Common myeloid progenitor, CD34-positive (primary cell): ENCODE measurements at regions of chr9 and their contacts with region 1.

Region 1: DNA sequence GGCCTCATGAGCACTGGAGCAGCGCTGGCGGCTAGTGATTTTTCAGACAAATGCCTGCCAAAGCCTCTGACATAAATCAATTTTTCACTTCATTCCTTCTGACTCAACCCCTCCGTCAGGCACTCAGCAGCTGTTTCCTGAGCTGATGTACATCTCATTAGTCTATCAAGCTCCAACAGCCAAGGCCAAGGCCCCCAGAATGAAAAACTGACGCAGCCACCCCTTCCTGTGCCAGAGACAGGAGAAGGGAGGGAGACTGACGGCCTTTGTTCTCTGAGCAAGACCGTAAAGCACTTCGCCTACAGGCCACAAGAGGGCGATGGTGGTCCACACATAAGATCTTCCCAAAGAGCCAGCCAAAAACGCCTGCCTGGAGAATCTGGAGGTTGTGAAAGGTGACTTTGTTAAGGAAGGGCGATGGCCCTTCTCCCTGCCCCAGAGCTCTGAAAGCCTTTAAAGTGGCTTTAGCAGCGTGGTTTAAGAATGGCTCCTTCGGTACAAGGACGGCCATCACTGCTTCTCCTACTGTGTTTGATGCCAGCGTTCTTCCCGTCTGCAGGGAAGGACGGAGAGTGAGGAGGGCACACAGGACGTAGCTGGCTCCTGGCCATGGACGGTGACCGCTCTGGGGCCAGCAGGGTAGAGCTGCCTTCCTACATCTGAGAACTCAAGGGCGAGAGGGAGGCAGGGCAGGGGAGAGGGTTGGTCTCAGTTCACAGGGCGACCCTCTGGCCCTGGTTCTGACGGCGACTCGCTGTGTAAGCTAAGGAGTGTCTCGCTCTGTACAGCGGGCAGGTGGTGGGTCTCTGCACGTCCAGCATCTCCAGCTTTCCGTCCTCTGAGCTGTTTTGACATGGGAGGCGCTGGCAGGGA is 37.0 kb downstream of the ALG2 start:
- DNase-seq: peak; percentile 95 to 99 (median 98)
- H3K4me3 ChIP-seq: peak overlapping the region in 4 of 7 experiments; percentile 38 to 65 (median 56)
- H3K27ac ChIP-seq: no peak overlapping the region
- H3K4me1 ChIP-seq: peaks cover 7 to 42% (median 32%) of the 10 kb centered on the region in 4 experiments
- H3K27me3 ChIP-seq: no peaks in the 10 kb centered on the region

Region 2: DNA sequence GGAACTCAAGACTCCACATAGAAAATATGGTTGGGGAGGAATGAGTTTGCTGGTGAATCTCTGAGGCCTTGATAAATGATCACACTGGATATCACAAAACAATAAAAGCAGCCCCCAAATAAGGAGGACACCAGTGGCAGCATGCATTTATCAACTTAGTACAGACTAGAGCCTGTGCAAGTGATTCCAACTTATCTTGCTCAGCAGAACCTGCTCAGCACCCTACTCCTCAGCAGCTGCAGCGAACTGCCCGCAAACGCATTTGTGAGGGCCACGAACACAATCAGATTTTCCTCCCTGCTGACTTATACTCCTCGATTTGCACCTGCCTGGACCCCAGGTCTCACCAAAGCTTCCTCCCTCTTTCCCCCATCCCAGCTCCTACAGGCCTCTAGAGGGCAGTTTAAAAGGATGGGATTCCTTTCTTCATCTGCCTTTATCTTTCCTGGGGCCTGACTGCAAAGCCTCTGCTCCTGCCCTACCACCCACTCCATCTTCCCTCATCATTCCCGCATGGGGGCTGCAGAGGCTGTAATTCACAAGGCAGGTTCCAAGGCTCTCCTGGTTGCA is 429.6 kb before region 1 on chr9:
- CTCF ChIA-PET with region 1: no interaction called
- POLR2A ChIA-PET with region 1: no interaction called
- DNase-seq: peak in 1 of 3 donors; percentile 13
- H3K4me3 ChIP-seq: no peak overlapping the region
- H3K27ac ChIP-seq: no peak overlapping the region
- H3K4me1 ChIP-seq: peaks cover 0 to 11% (median 0%) of the 10 kb centered on the region in 4 experiments
- H3K27me3 ChIP-seq: no peaks in the 10 kb centered on the region

Region 3: DNA sequence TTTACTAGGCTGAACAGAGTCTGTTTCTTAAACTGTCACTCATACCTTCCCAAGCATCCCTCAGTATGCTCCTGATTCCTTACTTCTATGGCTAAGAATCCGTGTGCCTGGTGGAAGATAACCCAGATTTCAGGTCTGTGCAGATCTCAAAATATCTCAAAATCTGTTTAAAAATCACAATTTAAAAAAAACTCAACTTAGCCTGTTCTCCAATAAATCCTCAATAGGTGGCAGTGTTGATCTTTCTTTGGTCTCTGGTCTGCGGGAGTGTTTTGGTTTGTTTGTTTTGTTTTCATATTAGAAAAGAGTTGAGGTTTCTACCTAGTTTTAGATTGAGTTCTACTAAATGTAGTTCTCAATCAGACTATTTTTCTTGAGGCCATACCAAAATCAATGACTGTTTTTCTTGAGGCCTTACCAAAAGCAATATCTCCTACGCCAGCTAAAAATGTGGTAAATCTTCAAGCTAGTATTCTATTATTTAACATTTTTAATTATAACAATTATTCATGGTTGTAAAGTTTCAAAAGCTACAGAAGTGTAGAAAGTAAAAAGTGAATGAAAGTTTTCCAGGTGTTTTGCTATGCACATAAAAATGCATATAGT is 21.8 kb before region 1 on chr9:
- CTCF ChIA-PET with region 1: interaction called, 148 read pairs
- POLR2A ChIA-PET with region 1: interaction called, 6 read pairs
- DNase-seq: peak; percentile 59 to 83 (median 71)
- H3K4me3 ChIP-seq: no peak overlapping the region
- H3K27ac ChIP-seq: no peak overlapping the region
- H3K4me1 ChIP-seq: peaks cover 3 to 9% (median 7%) of the 10 kb centered on the region in 4 experiments
- H3K27me3 ChIP-seq: peaks cover 0 to 17% (median 6%) of the 10 kb centered on the region in 5 experiments

Region 4: DNA sequence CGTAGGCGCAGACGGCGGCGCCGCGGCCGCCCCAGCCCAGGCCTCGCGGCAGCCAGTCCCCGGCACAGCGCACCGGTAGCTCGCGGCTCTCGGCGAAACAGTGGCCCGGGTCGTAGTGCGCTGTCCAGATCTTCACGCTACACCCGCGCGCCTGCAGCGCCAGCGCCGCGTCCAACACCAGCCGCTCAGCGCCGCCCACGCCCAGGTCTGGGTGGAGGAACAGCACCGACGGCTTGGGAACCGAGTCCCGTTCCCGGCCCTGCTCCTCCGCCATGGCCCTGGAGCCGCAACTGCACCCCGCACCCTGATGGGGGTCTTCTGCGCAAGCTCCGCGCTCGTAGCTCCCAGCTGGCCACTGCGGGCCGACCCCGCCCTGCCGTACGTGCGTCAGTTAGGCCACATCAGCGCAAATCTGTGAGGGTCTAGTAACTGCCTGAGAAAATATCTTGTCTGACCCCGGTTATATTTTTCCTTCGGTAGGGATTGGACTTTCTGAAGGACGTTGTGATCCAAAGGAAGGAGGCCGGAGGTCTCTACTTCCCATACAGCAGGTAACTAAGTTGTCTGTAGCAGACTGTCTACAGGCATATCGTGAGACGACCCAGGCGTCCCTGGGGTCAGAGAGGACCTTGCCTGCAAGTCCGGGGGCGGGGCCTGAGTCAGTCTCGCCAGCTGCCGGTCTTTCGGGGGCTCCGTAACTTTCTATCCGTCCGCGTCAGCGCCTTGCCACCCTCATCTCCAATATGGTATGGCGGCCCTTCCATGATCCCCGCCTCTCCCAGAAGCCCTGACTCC is 37.1 kb after region 1 on chr9 and contains the starts of genes ALG2 and SEC61B:
- CTCF ChIA-PET with region 1: interaction called, 43 read pairs
- POLR2A ChIA-PET with region 1: interaction called, 9 read pairs
- DNase-seq: peak; percentile 96 to 97 (median 97)
- H3K4me3 ChIP-seq: peak within 1 kb of the TSS; percentile 86 to 99 (median 93)
- H3K27ac ChIP-seq: peak within 1 kb of the TSS; percentile 99 to 100
- H3K4me1 ChIP-seq: peaks cover 16 to 37% (median 24%) of the 10 kb centered on the region in 4 experiments
- H3K27me3 ChIP-seq: no peaks in the 10 kb centered on the region

Region 5: GRCh38 chr9:99266255-99267023 is 81.7 kb after region 1 on chr9:
- CTCF ChIA-PET with region 1: interaction called, 16 read pairs
- POLR2A ChIA-PET with region 1: no interaction called
- DNase-seq: peak; percentile 87 to 90 (median 89)
- H3K4me3 ChIP-seq: peak overlapping the region in 2 of 7 experiments; percentile 21 to 64
- H3K27ac ChIP-seq: no peak overlapping the region
- H3K4me1 ChIP-seq: peaks cover 0 to 9% (median 5%) of the 10 kb centered on the region in 4 experiments
- H3K27me3 ChIP-seq: no peaks in the 10 kb centered on the region

Region 6: DNA sequence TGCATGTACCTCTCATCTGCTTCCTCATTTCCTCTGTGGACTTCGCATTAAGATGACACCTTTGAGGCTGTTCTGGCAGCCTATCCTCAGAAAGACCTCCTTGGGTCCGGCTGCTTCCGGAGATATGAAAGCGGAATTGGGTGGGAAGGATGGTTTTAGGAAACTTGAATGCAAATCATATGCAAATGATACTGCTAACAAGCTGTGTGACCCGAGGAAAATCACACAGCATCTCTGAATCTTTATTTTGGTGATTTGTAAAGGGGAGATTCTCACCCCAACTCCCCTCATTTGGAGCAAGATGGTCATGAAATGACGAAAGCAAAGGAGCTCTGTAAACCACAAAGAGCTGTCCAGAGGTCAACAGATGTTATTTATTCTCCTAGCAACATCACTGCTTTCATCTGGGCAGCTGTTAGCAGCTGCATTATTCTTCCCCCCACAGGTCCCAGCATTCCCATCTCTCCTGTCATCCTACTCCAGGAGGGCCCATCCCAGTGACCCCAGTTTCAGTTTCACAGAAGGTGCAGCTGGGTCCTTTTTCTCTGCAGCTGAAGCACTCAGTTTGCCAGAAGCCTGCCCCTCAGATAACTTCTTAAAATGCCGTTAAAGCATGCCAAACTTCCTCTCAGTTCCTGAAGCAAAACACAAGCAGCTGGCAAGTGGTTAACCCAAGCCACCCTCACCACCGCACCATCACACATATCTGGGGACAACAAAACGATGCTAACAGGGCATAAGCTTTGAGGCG is 306.9 kb after region 1 on chr9:
- CTCF ChIA-PET with region 1: no interaction called
- POLR2A ChIA-PET with region 1: no interaction called
- DNase-seq: peak; percentile 59 to 95 (median 94)
- H3K4me3 ChIP-seq: peak overlapping the region in 2 of 7 experiments; percentile 23 to 48
- H3K27ac ChIP-seq: peak overlapping the region in 1 of 2 experiments; percentile 62
- H3K4me1 ChIP-seq: peaks cover 2 to 22% (median 8%) of the 10 kb centered on the region in 4 experiments
- H3K27me3 ChIP-seq: no peaks in the 10 kb centered on the region

Region 7: DNA sequence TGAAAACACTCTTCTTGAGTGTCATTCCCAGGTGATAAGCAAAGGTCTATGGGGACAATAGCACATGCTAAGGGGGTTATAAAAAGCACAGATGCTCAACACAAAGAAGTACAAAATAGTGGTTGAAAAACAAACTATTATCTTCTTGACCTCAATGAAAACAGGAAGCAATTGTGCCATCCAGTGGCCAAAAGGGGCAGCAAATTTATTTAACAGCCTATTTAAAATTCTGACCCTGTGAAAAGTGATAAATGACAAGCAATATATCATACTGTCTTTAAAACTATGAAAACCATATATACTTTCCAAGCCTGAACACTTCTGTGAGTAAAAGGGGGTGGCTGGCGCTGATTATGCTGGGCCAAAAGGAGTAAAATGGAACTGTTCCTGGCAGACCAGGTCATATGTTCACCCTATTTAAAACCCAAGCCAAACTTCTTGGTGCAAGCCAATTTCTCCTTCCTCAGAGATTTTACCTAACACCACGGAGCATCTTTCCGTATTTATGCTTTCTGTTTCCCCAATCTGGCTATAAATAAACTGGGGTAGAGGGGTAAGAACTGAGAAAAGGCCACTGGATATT is 1138.3 kb after region 1 on chr9:
- CTCF ChIA-PET with region 1: interaction called, 17 read pairs
- POLR2A ChIA-PET with region 1: no interaction called
- DNase-seq: peak; percentile 54 to 69 (median 65)
- H3K4me3 ChIP-seq: no peak overlapping the region
- H3K27ac ChIP-seq: no peak overlapping the region
- H3K4me1 ChIP-seq: no peaks in the 10 kb centered on the region
- H3K27me3 ChIP-seq: no peaks in the 10 kb centered on the region